Vagina (tissue), 2 donors: ENCODE measurements at regions of chr4 and their contacts with region 1.

Region 1: DNA sequence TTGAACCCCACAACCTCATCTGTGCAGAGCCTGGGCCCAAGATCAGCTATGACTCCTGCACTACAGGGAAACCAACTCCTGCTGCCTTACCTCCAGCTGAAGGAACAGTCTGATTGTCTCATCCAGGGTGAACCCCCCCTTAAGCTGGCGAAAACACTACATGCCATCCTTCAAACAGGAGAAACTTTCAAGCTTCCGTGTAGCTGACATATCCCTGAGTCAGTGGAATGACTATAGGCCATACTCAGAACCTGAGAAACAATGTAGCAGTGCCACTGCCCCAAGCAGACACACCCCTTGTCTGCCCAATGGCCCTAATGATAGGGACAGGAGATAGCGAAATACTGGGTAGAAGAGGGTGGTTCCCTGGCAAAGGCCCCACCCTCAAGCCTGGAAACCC is 213.6 kb upstream of the PGRMC2 start:
- DNase-seq: no peak
- H3K4me3 ChIP-seq: no peak overlapping the region
- H3K27ac ChIP-seq: no peak overlapping the region
- H3K4me1 ChIP-seq: no peaks in the 10 kb centered on the region
- H3K27me3 ChIP-seq: no peaks in the 10 kb centered on the region
- CTCF ChIP-seq: no peak
- POLR2A ChIP-seq: no peak

Region 2: DNA sequence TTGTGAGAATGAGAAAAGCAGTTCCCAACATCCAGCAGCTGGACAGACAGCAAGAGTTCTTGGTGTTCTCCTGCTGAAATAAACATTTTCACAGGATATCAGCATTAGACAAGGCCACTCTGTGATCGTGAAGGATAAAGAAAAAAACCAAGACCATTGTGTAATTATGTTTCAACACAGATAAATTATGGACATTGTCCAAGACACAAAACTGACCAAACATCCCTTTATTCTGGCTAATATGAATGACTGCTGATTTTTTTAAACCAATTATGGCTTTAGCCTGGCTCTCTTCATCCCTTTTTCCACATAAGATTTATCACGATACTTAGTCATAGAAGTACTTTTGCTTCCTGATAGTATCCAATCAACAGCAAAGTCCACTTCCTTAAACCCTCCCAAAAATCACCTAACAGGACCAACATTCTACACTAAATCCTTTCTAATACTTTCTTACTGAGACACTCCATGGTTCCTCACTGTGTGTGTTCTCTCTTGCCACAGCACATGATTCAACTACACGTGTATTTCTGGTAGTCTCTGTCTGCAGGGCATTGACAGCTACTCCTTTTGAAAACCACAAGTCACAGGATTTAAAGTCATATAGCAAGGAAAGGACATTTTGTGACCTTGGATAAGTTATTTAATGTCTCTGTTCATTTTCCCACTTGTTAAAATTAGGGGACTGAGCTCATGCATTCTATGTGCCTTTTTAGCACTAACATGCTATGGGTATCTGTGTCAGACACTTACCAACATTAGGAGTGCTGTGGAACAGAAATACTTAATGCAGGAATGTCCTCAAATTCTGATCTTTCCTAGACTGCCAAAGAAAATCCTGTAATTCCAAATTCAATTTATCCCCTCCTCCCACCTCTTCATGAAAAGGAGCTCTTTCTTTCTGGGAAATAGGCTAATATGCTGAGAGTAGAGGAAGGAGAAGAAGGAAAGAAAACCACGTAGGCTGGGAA is 76.4 kb before region 1 on chr4:
- intact Hi-C with region 1: no loop called
- DNase-seq: no peak
- H3K4me3 ChIP-seq: no peak overlapping the region
- H3K27ac ChIP-seq: peak overlapping the region; percentile 0
- H3K4me1 ChIP-seq: no peaks in the 10 kb centered on the region
- H3K27me3 ChIP-seq: no peaks in the 10 kb centered on the region
- CTCF ChIP-seq: no peak
- POLR2A ChIP-seq: no peak

Region 3: GRCh38 chr4:128513664-128514484 is 12.6 kb after region 1 on chr4:
- intact Hi-C with region 1: loop called (anchors 1 kb)
- DNase-seq: no peak
- H3K4me3 ChIP-seq: no peak overlapping the region
- H3K27ac ChIP-seq: no peak overlapping the region
- H3K4me1 ChIP-seq: peaks cover 24% of the 10 kb centered on the region
- H3K27me3 ChIP-seq: no peaks in the 10 kb centered on the region
- CTCF ChIP-seq: no peak
- POLR2A ChIP-seq: no peak